ENCODE measurements at regions of chr16 and their contacts with region 1.

Region 1: GRCh38 chr16:21501909-21502667 is 97.3 kb upstream of the METTL9 start:
- DNase-seq: peak; percentile 94
- H3K4me3 Mint-ChIP-seq: peak overlapping the region; percentile 82
- H3K27ac Mint-ChIP-seq: peak overlapping the region; percentile 90
- H3K4me1 Mint-ChIP-seq: peaks cover 18% of the 10 kb centered on the region
- H3K27me3 Mint-ChIP-seq: no peaks in the 10 kb centered on the region

Region 2: DNA sequence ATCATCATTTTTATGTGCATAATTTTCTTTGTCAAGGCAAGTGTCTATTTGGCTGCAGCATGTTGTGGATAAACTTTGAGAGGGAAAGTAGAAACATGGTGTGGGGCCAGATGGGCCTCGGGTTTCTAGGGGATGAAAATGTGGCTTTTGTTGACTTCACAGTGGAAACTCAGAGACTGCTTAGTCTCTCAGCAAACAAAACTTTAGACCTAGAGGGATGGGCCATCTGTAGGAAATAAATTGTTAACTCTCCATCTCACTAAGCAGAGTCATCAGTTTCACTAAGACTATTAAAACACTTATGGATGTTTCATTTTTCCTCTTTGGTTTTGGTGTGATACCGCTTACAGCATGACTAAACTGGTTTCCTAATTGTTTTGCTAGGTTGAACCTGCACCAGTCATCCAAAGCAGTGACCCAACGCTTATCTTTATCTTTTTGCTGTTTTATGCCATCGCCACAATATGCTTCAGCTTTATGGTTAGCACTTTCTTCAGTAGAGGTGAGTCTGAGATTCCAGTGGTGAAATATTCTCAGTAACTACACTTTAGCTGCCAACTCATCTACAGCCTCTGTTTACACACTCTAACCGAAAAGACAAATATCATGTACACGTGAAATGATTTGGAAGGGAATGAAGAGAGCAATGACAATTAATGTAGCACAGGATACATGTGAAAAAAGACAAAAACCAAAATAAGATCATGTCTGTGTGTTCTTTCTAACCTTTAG is 163.4 kb before region 1 on chr16:
- CTCF ChIA-PET with region 1: no interaction called
- POLR2A ChIA-PET with region 1: no interaction called
- intact Hi-C with region 1: no loop called
- DNase-seq: no peak
- H3K4me3 Mint-ChIP-seq: no peak overlapping the region
- H3K27ac Mint-ChIP-seq: no peak overlapping the region
- H3K4me1 Mint-ChIP-seq: peaks cover 5% of the 10 kb centered on the region
- H3K27me3 Mint-ChIP-seq: peaks cover 10% of the 10 kb centered on the region

Region 3: DNA sequence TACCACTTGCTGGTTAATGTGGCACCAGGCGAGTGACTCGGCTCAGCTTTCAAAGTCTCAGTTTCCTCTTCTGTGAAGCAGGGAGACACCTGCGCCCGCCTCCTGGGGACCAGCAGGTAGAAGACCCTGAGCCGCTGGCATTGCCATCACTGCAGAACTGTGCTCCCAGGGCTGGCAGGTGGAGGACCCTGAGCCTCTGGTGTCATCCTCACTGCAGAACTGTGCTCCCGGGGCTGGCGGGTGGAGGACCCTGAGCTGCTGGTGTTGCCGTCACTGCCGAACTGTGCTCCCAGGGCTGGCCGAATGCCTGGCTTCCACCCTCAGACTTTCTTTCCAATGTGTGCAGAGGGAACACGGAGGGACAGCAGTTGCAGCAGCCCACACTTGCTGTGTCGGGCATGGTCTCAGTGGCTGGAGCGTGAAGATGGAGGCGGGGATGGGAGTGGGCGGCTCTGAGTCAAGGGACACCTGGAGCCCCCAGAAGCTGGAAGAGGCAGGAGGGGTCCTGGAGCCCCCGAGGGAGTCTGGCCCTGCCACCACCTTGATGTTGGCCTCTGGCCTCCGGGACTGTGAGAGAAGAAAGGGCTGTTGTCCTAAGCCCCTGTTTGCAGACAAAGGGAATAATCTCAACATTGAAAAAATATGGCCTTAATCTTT is 21.5 kb after region 1 on chr16:
- CTCF ChIA-PET with region 1: no interaction called
- POLR2A ChIA-PET with region 1: interaction called, 10 read pairs
- intact Hi-C with region 1: no loop called
- DNase-seq: no peak
- H3K4me3 Mint-ChIP-seq: no peak overlapping the region
- H3K27ac Mint-ChIP-seq: no peak overlapping the region
- H3K4me1 Mint-ChIP-seq: no peaks in the 10 kb centered on the region
- H3K27me3 Mint-ChIP-seq: no peaks in the 10 kb centered on the region

Region 4: DNA sequence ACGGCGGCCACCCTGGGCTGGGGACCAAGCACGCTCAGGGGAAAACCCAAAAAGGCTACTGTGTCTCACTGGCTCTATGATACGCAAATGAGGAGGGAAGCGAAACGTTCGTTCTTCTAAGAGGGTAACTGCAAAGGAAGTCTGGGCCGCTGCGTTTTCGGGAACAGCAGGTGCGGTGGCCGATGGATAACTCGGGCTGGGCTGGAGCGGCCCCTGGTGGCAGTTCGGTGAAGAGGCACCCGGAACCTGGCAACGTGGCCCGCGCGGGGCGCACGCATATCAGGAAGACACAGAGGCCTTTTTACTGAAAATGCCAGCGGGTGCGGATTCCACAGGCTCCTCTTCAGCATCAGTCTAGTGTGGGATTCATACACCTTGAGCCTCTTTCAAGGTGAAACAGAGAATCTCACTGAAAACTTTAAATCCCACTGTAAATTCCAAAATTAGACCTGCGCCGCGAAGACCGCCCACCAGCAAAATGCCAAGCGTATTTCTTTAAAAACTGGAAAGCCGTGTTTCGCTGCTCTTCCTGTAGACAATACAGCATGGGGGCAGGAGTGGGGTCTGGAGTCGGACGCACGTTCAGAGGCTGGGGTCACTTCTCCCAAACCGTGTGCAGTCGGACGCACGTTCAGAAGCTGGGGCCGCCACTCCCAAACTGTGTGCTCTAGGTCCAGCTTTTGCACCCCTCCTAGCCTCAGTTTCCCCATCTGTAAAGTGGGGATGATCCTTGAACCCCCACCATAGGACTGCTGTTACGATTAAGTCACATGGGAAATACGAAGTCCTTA is 52.9 kb after region 1 on chr16:
- CTCF ChIA-PET with region 1: no interaction called
- POLR2A ChIA-PET with region 1: no interaction called
- intact Hi-C with region 1: loop called (anchors 10 kb)
- DNase-seq: peak; percentile 95
- H3K4me3 Mint-ChIP-seq: peak overlapping the region; percentile 18
- H3K27ac Mint-ChIP-seq: peak overlapping the region; percentile 25
- H3K4me1 Mint-ChIP-seq: peaks cover 8% of the 10 kb centered on the region
- H3K27me3 Mint-ChIP-seq: peaks cover 4% of the 10 kb centered on the region

Region 5: DNA sequence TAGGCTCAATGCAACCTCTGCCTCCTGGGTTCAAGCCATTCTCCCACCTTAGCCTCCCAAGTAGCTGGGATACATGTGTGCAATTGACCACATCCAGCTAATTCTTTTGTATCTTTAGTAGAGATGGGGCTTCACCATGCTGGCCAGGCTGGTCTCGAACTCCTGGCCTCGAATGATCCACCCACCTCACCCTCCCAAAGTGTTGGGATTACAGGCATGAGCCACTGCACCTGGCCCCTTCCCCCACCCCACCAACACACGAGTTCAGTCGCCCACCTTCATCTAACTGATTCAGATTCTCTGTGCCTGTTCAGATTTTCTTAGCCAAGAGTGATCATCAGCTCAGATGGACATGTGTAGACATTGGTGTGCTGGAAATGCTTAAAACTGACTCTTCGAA is 72.3 kb after region 1 on chr16:
- CTCF ChIA-PET with region 1: no interaction called
- POLR2A ChIA-PET with region 1: no interaction called
- intact Hi-C with region 1: no loop called
- DNase-seq: no peak
- H3K4me3 Mint-ChIP-seq: no peak overlapping the region
- H3K27ac Mint-ChIP-seq: no peak overlapping the region
- H3K4me1 Mint-ChIP-seq: no peaks in the 10 kb centered on the region
- H3K27me3 Mint-ChIP-seq: no peaks in the 10 kb centered on the region